Motor neuron (in vitro differentiated cells): ENCODE measurements at regions of chr7 and their contacts with region 1.

Region 1: GRCh38 chr7:43700059-43700501 is 29.2 kb downstream of the COA1 start:
- ATAC-seq: peak in 4 of 8 experiments; percentile 29 to 53 (median 43)
- H3K4me3 ChIP-seq: no peak overlapping the region
- H3K27ac ChIP-seq: no peak overlapping the region
- H3K4me1 ChIP-seq: peaks cover 0 to 12% of the 10 kb centered on the region in 2 donors

Region 2: DNA sequence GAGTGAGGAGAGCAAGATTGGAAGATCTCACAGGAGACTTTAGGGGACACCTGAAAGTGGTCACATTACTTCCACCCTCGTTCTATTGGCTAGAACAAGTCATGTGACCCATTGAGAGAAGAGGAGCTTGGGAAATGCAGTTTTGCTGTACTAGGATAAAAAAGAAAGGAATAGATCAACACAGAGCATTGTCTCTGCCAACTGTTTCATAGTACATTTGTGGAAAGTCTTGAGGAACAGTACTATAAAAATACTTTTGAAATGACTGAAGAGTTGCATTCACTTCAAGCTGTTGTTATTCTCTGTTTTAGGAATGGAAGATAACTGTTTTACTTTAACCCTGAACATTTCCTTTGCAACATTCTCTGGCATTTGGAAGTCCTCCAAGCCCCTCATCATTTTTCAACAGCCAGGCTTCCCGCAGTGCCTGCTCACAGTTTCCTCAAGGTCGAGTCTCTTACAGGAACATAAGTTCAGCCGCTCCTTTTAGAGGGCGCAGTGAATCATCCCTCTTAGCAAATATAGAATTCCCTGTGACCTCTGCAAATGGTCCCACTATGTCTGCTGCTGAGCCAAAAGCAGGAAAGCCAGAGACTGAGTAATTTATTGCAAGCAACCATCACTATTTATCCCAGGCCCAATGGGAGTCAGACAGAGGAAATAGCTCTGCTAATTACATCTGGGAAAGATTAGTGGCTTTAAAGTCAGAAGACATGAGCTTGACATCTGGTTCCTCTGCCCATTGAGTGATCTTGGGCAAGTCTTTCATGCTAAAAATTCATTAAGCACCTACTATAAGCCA is 727.2 kb before region 1 on chr7:
- in situ Hi-C with region 1: loop called in 1 of 9 experiments (anchors 25 kb)
- ATAC-seq: peak in 6 of 8 experiments; percentile 22 to 89 (median 40)
- H3K4me3 ChIP-seq: no peak overlapping the region
- H3K27ac ChIP-seq: no peak overlapping the region
- H3K4me1 ChIP-seq: no peaks in the 10 kb centered on the region

Region 3: GRCh38 chr7:43417455-43417854 is 282.6 kb before region 1 on chr7:
- in situ Hi-C with region 1: no loop called
- ATAC-seq: no peak
- H3K4me3 ChIP-seq: no peak overlapping the region
- H3K27ac ChIP-seq: no peak overlapping the region
- H3K4me1 ChIP-seq: no peaks in the 10 kb centered on the region

Region 4: DNA sequence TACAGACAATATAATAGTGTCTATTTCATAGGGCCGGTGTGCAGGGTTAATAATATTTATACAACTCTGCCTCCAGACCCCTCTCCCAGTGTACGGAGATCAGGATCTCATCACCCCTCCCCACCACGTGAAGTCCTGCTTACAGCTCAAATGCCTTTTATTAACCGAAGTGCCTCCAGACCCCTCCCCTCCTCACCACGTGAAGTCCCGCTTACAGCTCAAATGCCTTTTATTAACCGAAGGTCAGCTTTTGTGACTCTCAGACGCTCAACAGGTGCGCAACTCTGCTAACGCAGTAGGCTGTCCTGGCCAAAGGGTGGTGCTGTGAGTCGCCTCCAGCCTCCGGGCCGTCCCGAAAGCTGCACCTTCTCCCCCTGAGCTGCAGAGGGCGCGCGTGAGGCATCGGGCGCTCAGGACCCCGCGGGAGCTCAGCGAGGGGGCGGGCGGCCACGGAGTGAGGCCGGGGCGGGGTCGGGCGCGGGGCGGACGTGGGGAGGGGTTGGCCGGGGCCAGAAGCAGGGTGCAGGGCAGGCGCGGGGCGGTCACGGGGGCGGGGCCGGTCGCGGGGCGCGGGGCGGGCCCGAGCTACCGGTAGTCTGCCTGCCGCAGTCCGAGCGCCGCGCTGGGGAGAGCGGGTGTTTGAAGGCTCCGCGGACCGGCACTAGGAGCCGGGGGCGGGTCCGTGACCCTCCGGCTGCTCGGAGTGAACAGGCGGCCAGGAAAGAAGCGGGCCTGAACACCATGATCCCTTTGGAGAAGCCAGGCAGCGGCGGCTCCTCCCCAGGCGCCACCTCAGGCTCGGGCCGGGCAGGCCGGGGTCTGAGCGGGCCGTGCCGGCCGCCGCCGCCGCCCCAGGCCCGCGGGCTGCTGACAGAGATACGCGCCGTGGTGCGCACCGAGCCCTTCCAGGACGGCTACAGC is 117.3 kb before region 1 on chr7 and contains the start of gene STK17A:
- in situ Hi-C with region 1: loop called in 5 of 9 experiments (anchors 10 to 25 kb)
- ATAC-seq: peak; percentile 80 to 92 (median 88)
- H3K4me3 ChIP-seq: peak within 1 kb of the TSS; percentile 48 to 82 (median 73)
- H3K27ac ChIP-seq: peak within 1 kb of the TSS in 1 of 2 donors; percentile 6
- H3K4me1 ChIP-seq: peaks cover 6% of the 10 kb centered on the region in 2 donors
- total RNA-seq, gene STK17A: 3.9 to 18.4 (median 13.4) TPM